Naive thymus-derived CD4-positive, alpha-beta T cell (primary cell): ENCODE measurements at regions of chr6 and their contacts with region 1.

Region 1: GRCh38 chr6:617445-618100 is 39.3 kb downstream of the HUS1B start:
- DNase-seq: no peak
- ATAC-seq: no peak
- H3K4me3 ChIP-seq: no peak overlapping the region
- H3K4me3 Mint-ChIP-seq: no peak overlapping the region
- H3K27ac ChIP-seq: no peak overlapping the region
- H3K27ac Mint-ChIP-seq: no peak overlapping the region
- H3K4me1 ChIP-seq: no peaks in the 10 kb centered on the region
- H3K4me1 Mint-ChIP-seq: peaks cover 0 to 11% (median 4%) of the 10 kb centered on the region in 7 donors
- H3K27me3 ChIP-seq: no peaks in the 10 kb centered on the region
- H3K27me3 Mint-ChIP-seq: no peaks in the 10 kb centered on the region

Region 2: GRCh38 chr6:683742-684440 is 66.3 kb after region 1 on chr6:
- CTCF ChIA-PET with region 1: interaction called, 3 read pairs
- POLR2A ChIA-PET with region 1: no interaction called
- intact Hi-C with region 1: loop called in 1 of 2 experiments (anchors 10 kb)
- DNase-seq: no peak
- ATAC-seq: no peak
- H3K4me3 ChIP-seq: no peak overlapping the region
- H3K4me3 Mint-ChIP-seq: peak overlapping the region; percentile 14 to 82 (median 62)
- H3K27ac ChIP-seq: no peak overlapping the region
- H3K27ac Mint-ChIP-seq: peak overlapping the region in 2 of 9 donors; percentile 79 to 80
- H3K4me1 ChIP-seq: peaks cover 20 to 27% of the 10 kb centered on the region in 2 donors
- H3K4me1 Mint-ChIP-seq: peaks cover 42 to 59% (median 50%) of the 10 kb centered on the region in 7 donors
- H3K27me3 ChIP-seq: no peaks in the 10 kb centered on the region
- H3K27me3 Mint-ChIP-seq: no peaks in the 10 kb centered on the region